Common myeloid progenitor, CD34-positive (primary cell): ENCODE measurements at regions of chr1 and their contacts with region 1.

Region 1: GRCh38 chr1:8858888-8859706 is 19.4 kb downstream of the ENO1 start:
- DNase-seq: peak; percentile 82 to 87 (median 83)
- H3K4me3 ChIP-seq: peak overlapping the region in 1 of 7 experiments; percentile 16
- H3K27ac ChIP-seq: peak overlapping the region; percentile 53 to 81
- H3K4me1 ChIP-seq: peaks cover 12 to 80% (median 70%) of the 10 kb centered on the region in 4 experiments
- H3K27me3 ChIP-seq: no peaks in the 10 kb centered on the region

Region 2: GRCh38 chr1:8817406-8818324 is 41.4 kb before region 1 on chr1 and contains the start of gene RERE:
- CTCF ChIA-PET with region 1: interaction called, 18 read pairs
- POLR2A ChIA-PET with region 1: interaction called, 6 read pairs
- DNase-seq: peak; percentile 95 to 97 (median 97)
- H3K4me3 ChIP-seq: peak within 1 kb of the TSS; percentile 85 to 95 (median 91)
- H3K27ac ChIP-seq: peak within 1 kb of the TSS; percentile 92 to 95
- H3K4me1 ChIP-seq: peaks cover 39 to 74% (median 44%) of the 10 kb centered on the region in 4 experiments
- H3K27me3 ChIP-seq: no peaks in the 10 kb centered on the region

Region 3: GRCh38 chr1:8873506-8874229 is 14.6 kb after region 1 on chr1:
- CTCF ChIA-PET with region 1: interaction called, 131 read pairs
- POLR2A ChIA-PET with region 1: interaction called, 27 read pairs
- DNase-seq: peak; percentile 89 to 96 (median 95)
- H3K4me3 ChIP-seq: peak overlapping the region in 6 of 7 experiments; percentile 19 to 56 (median 44)
- H3K27ac ChIP-seq: peak overlapping the region; percentile 59 to 91
- H3K4me1 ChIP-seq: peaks cover 32 to 75% (median 52%) of the 10 kb centered on the region in 4 experiments
- H3K27me3 ChIP-seq: no peaks in the 10 kb centered on the region

Region 4: DNA sequence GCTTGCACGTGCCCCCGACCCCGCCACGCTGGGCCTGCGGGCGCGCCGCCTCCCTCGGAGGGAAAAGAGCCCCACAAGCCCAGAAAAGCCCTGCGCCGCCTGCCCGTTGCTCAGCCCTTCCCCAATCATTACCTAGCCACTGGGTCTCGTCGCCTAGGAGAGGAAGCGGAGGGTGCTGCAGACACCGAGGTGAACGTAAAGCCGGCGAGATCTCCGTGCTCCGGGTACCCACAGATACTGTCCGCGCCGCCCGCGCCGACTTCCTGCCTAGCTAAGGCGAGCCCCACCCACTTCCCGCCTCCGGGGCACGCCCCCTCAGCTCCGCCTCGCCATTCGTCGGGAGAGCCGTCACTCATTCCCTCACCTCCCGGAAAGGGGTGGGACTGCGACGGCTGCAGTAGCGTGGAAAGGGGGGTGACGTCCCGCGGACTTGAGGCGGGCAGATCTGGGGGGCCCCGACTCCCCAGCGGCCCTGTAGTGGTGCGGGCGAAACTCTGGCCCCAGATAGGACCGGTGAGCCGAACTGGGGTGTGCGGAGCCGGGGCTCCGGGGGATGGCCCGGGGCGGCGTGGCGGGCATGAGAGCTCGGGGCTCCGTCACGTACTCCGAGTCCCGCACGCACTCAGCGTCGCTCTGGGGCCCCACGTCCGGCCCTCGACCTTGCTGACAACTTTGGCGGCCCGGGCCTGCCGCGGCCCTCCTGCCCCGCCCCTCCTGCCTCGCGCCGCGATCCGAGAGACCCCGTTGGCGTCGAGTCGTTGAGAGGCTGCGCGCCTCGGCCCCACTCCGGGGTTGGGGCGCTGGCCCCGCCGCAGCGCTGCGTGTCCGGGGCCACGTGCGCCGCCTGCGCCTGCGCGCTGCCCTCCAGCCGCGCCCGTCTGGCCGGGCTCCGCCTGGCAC is 19.6 kb after region 1 on chr1 and contains the start of gene ENO1:
- CTCF ChIA-PET with region 1: interaction called, 131 read pairs
- POLR2A ChIA-PET with region 1: interaction called, 27 read pairs
- DNase-seq: peak; percentile 97 to 98 (median 97)
- H3K4me3 ChIP-seq: peak within 1 kb of the TSS; percentile 80 to 97 (median 90)
- H3K27ac ChIP-seq: peak within 1 kb of the TSS; percentile 72 to 91
- H3K4me1 ChIP-seq: peaks cover 32 to 69% (median 57%) of the 10 kb centered on the region in 4 experiments
- H3K27me3 ChIP-seq: no peaks in the 10 kb centered on the region

Region 5: GRCh38 chr1:9004700-9005394 is 145.8 kb after region 1 on chr1:
- CTCF ChIA-PET with region 1: interaction called, 18 read pairs
- POLR2A ChIA-PET with region 1: no interaction called
- DNase-seq: peak; percentile 79 to 88 (median 83)
- H3K4me3 ChIP-seq: peak overlapping the region in 1 of 7 experiments; percentile 1
- H3K27ac ChIP-seq: no peak overlapping the region
- H3K4me1 ChIP-seq: peaks cover 0 to 17% (median 11%) of the 10 kb centered on the region in 4 experiments
- H3K27me3 ChIP-seq: no peaks in the 10 kb centered on the region